ENCODE measurements at regions of chr12 and their contacts with region 1.

Region 1: DNA sequence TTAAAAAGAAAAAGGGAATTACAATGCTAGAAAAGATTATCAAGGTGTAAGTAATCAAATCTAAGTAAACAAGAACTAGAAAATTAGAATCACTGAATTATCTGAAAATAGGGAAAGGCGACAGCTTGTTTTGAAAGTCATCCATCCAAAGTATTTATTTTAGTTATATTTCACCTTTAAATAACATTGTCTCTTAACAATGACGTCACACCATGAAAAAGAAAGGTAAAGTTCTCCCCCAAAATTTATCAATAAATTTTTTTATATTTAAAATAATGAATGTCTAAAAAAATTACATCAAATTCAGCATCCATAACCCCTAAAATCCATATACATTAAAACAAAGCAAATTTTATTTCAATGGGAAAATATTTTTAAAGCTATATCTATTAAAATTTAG is 223.2 kb downstream of the RERGL start:
- DNase-seq: no peak
- ATAC-seq: no peak
- H3K4me3 Mint-ChIP-seq: no peak overlapping the region
- H3K27ac Mint-ChIP-seq: no peak overlapping the region
- H3K4me1 Mint-ChIP-seq: no peaks in the 10 kb centered on the region
- H3K27me3 Mint-ChIP-seq: no peaks in the 10 kb centered on the region
- CTCF ChIP-seq: no peak

Region 2: DNA sequence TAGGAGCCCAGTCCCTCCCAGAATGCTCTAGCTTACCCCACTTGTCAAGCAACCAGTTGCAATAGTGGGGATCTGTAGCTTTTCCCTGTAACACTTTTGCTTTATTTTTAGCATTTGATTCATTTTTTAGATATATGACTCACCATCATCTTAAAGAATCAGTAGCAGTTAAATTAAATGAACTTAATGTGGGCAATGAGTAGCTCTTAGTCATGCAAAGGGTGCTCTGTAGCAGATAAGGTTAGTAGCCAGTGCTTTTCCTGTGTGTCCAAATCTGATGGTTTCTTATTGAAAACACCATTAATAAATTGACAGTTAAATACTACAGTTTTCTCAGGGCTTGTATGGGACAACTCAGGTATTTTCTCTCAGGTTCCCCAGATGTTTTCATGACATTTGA is 88.6 kb before region 1 on chr12:
- CTCF ChIA-PET with region 1: no interaction called
- POLR2A ChIA-PET with region 1: no interaction called
- intact Hi-C with region 1: loop called (anchors 2 kb)
- DNase-seq: no peak
- ATAC-seq: no peak
- H3K4me3 Mint-ChIP-seq: no peak overlapping the region
- H3K27ac Mint-ChIP-seq: no peak overlapping the region
- H3K4me1 Mint-ChIP-seq: no peaks in the 10 kb centered on the region
- H3K27me3 Mint-ChIP-seq: no peaks in the 10 kb centered on the region
- CTCF ChIP-seq: no peak

Region 3: GRCh38 chr12:17818931-17819330 is 47.9 kb before region 1 on chr12:
- CTCF ChIA-PET with region 1: no interaction called
- POLR2A ChIA-PET with region 1: no interaction called
- intact Hi-C with region 1: no loop called
- DNase-seq: no peak
- ATAC-seq: no peak
- H3K4me3 Mint-ChIP-seq: no peak overlapping the region
- H3K27ac Mint-ChIP-seq: no peak overlapping the region
- H3K4me1 Mint-ChIP-seq: no peaks in the 10 kb centered on the region
- H3K27me3 Mint-ChIP-seq: no peaks in the 10 kb centered on the region
- CTCF ChIP-seq: no peak

Region 4: DNA sequence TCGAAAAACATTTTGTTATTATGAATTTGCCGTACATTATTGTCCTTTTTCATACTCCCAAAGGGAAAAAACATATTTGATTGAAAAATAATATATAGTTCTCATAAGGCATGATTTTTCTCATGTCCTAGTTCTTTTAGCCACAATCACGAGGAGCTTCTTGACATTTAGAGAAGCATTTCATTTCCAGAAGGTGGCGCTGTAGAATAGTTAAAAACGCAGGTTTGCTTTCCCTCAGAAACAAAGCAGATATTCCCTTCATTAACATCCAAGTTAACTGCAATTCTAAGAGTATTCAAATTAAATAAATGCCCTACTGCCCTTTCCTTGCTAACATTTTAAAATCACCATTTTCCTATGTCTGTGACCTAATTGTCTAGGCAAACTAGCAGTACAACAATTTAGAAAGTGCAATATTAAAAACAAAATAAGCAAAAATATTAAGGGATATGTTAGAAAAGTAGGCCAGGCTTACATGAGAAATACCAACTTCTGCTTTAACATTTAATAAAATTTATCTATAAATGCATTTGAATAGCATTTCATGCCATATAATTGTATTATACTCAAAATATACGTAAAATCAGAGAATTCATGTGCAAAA is 383.6 kb after region 1 on chr12:
- CTCF ChIA-PET with region 1: no interaction called
- POLR2A ChIA-PET with region 1: no interaction called
- intact Hi-C with region 1: no loop called
- DNase-seq: no peak
- ATAC-seq: no peak
- H3K4me3 Mint-ChIP-seq: no peak overlapping the region
- H3K27ac Mint-ChIP-seq: no peak overlapping the region
- H3K4me1 Mint-ChIP-seq: no peaks in the 10 kb centered on the region
- H3K27me3 Mint-ChIP-seq: no peaks in the 10 kb centered on the region
- CTCF ChIP-seq: no peak

Measured in activated B cell treated with CpG ODN at 0.5 μM for 24 hours (primary cell).